ENCODE measurements at regions of chr7 and their contacts with region 1.

Region 1: GRCh38 chr7:106901828-106902441 is 36.9 kb downstream of the PIK3CG start:
- DNase-seq: no peak
- H3K4me3 ChIP-seq: no peak overlapping the region
- H3K27ac ChIP-seq: no peak overlapping the region
- H3K4me1 ChIP-seq: no peaks in the 10 kb centered on the region
- H3K27me3 ChIP-seq: no peaks in the 10 kb centered on the region
- CTCF ChIP-seq: no peak

Region 2: DNA sequence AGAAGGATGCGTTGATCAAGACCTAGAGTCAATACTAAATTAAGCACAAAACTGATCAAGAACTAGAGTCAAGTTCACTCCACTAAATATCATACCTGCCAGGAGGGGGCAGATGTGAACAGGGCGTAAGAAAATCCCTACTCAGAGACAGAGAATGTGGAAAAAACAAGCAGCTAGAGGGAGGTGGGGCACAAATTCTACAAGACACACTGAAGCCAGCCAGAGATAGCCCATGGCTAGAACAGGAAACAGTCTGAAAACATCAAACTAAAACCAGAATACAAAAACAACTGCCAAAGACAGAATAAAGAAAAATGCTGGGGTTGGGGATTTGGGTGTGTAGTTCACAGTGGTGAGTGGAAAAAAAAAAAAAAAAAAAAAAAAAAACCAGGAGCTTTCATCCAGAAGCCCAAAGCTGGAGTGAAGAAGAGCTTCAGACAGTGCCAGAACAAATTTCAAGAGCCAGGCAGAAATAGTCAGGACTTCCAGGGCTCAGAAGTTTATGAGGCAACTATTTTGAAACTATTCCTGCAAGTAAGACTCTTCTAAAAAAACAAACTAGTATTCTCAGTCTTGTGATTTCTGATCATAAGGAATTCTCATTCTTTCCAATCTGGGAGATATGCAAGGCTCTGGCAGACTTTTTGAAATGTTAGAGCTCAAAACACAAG is 359.2 kb before region 1 on chr7:
- CTCF ChIA-PET with region 1: no interaction called
- POLR2A ChIA-PET with region 1: no interaction called
- intact Hi-C with region 1: no loop called
- DNase-seq: peak; percentile 61 to 70
- H3K4me3 ChIP-seq: no peak overlapping the region
- H3K27ac ChIP-seq: no peak overlapping the region
- H3K4me1 ChIP-seq: peaks cover 8% of the 10 kb centered on the region; the same call in 1 of the 2 replicates
- H3K27me3 ChIP-seq: no peaks in the 10 kb centered on the region
- CTCF ChIP-seq: peak; percentile 82

Region 3: GRCh38 chr7:106938803-106939202 is 36.9 kb after region 1 on chr7:
- CTCF ChIA-PET with region 1: no interaction called
- POLR2A ChIA-PET with region 1: interaction called, 41 read pairs
- intact Hi-C with region 1: no loop called
- DNase-seq: no peak
- H3K4me3 ChIP-seq: no peak overlapping the region
- H3K27ac ChIP-seq: no peak overlapping the region
- H3K4me1 ChIP-seq: no peaks in the 10 kb centered on the region
- H3K27me3 ChIP-seq: no peaks in the 10 kb centered on the region
- CTCF ChIP-seq: no peak

Region 4: DNA sequence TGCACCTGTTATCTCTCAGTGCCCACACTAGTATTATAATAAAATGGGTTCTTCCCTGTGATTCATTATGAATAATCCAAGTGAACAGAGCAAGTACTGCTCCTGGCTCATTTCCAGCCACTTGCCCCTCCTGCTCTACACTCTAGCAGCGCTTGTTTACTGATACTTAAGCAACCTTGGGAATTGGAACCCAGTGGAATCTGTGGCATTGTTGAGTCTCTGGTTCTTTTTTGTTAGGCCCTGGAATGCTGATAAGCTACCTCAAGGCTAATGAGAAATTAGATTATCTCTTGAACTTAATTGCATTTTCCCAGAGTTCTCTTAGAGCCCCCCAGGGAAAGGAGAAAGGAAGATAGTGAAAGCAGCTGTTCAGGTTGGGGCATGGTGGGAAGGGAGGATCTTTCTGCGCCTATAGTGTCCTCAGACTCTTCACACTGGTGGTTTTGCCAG is 176.6 kb after region 1 on chr7:
- CTCF ChIA-PET with region 1: no interaction called
- POLR2A ChIA-PET with region 1: no interaction called
- intact Hi-C with region 1: no loop called
- DNase-seq: peak; percentile 50 to 81
- H3K4me3 ChIP-seq: no peak overlapping the region
- H3K27ac ChIP-seq: no peak overlapping the region
- H3K4me1 ChIP-seq: peaks cover 9% of the 10 kb centered on the region
- H3K27me3 ChIP-seq: no peaks in the 10 kb centered on the region
- CTCF ChIP-seq: no peak

Measured in PC-9 (cell line).